ENCODE measurements at regions of chr3 and their contacts with region 1.

Region 1: GRCh38 chr3:15268033-15268631 is 62.1 kb downstream of the CAPN7 start:
- DNase-seq: peak; percentile 79 to 91 (median 88)
- H3K4me3 ChIP-seq: peak overlapping the region in 6 of 59 donors; percentile 6 to 31 (median 18)
- H3K27ac ChIP-seq: peak overlapping the region in 54 of 59 donors; percentile 1 to 98 (median 93)
- H3K27me3 ChIP-seq: no peaks in the 10 kb centered on the region
- CTCF ChIP-seq: peak; percentile 81 to 98 (median 95)

Region 2: GRCh38 chr3:14947886-14948555 is 320.1 kb before region 1 on chr3:
- intact Hi-C with region 1: loop called in 1 of 2 experiments (anchors 10 kb)
- DNase-seq: peak; percentile 97 to 99 (median 98)
- H3K4me3 ChIP-seq: peak overlapping the region; percentile 65 to 98 (median 91)
- H3K27ac ChIP-seq: peak overlapping the region; percentile 95 to 100 (median 100)
- H3K27me3 ChIP-seq: no peaks in the 10 kb centered on the region
- CTCF ChIP-seq: peak in 2 of 56 donors; percentile 4 to 13

Region 3: GRCh38 chr3:15108082-15108545 is 160.0 kb before region 1 on chr3:
- intact Hi-C with region 1: loop called in 1 of 2 experiments (anchors 10 kb)
- DNase-seq: peak; percentile 60 to 88 (median 74)
- H3K4me3 ChIP-seq: peak overlapping the region in 10 of 59 donors; percentile 9 to 38 (median 23)
- H3K27ac ChIP-seq: no peak overlapping the region
- H3K27me3 ChIP-seq: no peaks in the 10 kb centered on the region
- CTCF ChIP-seq: peak; percentile 66 to 94 (median 88)

Region 4: DNA sequence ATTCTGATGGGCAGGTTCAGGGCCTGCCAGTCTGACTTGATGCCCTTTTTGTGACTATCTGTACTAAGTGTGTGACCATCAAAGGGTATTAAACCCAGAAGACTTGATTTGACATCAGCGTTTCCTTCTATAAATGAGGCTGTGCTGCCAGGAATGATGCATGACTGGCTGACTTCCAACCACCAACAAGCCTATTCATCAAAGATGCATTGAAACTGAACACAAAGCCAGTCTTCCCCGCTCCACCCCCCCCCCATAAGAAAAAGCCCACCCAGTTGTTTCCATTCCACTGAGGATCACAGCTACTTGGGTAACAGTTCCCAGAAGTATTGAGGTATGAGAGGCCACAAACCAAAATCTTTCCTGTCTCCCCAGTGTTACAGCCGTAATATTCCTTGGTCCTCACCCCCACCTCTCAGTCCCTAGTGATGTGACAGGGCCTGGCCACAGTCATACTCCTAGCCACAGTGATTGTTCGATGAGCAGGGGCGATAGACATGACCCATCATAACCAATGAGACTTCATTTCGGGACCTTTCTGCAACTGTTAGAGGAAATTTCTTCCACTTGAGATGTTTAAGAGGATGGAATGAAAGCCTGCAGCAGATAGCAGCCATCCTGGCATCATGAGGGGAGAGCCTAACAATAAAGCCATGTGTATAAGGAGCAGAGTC is 41.7 kb after region 1 on chr3:
- intact Hi-C with region 1: loop called in 1 of 2 experiments (anchors 2 kb)
- DNase-seq: peak in 8 of 10 donors; percentile 42 to 86 (median 68)
- H3K4me3 ChIP-seq: peak overlapping the region in 2 of 59 donors; percentile 29 to 35
- H3K27ac ChIP-seq: peak overlapping the region in 58 of 59 donors; percentile 15 to 92 (median 77)
- H3K27me3 ChIP-seq: no peaks in the 10 kb centered on the region
- CTCF ChIP-seq: no peak

Region 5: DNA sequence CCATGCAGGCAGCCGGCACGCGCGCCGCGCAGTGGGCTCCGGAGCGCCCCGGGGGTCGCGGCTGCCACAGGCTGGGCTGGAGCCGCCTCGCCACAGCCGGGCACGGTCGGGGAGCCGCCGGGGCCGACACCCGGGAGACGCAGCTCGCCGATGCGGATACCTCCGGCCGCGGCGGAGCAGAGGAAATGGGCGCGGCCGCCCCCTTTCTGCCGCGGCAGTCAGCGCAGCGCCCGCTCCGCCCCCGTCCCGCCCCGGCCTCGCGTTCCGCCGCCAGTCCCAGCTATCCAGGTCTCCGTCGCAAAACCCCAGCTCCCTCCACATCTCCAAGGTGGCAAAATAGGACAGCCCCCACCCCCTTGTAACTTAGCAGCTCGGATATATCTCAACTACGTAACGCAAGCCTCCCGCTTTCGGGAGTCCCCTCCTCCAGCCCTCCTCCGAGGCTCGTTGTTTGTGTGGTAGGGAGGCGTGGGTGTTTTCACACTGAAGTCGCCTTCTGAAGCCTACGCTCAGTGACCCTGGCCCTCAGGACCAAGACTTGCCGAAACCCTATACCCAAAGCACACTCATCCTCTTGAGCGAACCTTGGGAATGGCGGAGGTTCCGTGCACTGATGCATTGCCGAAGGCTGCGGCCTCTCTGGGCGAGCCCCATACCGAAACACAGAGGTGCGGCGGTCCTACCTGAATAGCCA is 64.4 kb after region 1 on chr3 and contains the start of gene SH3BP5:
- intact Hi-C with region 1: loop called (anchors 1 kb)
- DNase-seq: peak; percentile 47 to 87 (median 70)
- H3K4me3 ChIP-seq: peak within 1 kb of the TSS; percentile 63 to 97 (median 89)
- H3K27ac ChIP-seq: peak within 1 kb of the TSS; percentile 38 to 97 (median 86)
- H3K27me3 ChIP-seq: no peaks in the 10 kb centered on the region
- CTCF ChIP-seq: peak; percentile 48 to 91 (median 76)
- total RNA-seq, gene SH3BP5: 30.2 to 111 (median 66.8) TPM

Region 6: GRCh38 chr3:15377961-15378791 is 110.0 kb after region 1 on chr3:
- intact Hi-C with region 1: loop called (anchors 1 to 2 kb)
- DNase-seq: peak; percentile 91 to 99 (median 95)
- H3K4me3 ChIP-seq: peak overlapping the region in 41 of 59 donors; percentile 1 to 50 (median 32)
- H3K27ac ChIP-seq: peak overlapping the region in 53 of 59 donors; percentile 3 to 87 (median 64)
- H3K27me3 ChIP-seq: no peaks in the 10 kb centered on the region
- CTCF ChIP-seq: peak; percentile 82 to 99 (median 96)

Region 7: DNA sequence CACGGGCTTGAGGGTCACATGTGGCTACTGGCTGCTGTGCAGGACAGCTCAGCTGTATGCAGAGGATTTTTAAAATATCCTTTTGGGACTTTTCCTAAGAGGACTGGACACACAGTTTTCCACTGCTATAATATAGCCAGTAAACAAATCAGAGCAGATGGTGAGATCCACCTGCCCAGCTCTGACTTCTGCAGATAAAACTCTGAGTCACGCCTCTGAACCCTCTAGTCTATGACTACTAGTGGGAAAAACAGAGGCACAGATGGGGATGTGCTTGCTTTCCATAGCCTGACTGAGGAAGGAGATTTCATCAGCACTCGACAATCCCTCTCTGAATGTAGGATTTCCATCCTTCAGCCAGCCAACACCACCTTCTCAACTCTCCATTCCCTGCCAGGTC is 208.2 kb after region 1 on chr3:
- intact Hi-C with region 1: no loop called
- DNase-seq: peak in 1 of 10 donors; percentile 53
- H3K4me3 ChIP-seq: no peak overlapping the region
- H3K27ac ChIP-seq: peak overlapping the region in 24 of 59 donors; percentile 18 to 79 (median 52)
- H3K27me3 ChIP-seq: no peaks in the 10 kb centered on the region
- CTCF ChIP-seq: no peak

Measured in dorsolateral prefrontal cortex (tissue), 120 donors.